Calu3 (cell line): ENCODE measurements at regions of chr16 and their contacts with region 1.

Region 1: GRCh38 chr16:10828851-10829731 is 10.5 kb upstream of the TVP23A start:
- DNase-seq: peak; percentile 79
- H3K4me3 Mint-ChIP-seq: peak overlapping the region; percentile 61
- H3K27ac Mint-ChIP-seq: peak overlapping the region; percentile 57
- H3K4me1 Mint-ChIP-seq: peaks cover 21% of the 10 kb centered on the region
- H3K27me3 Mint-ChIP-seq: no peaks in the 10 kb centered on the region
- CTCF ChIP-seq: no peak

Region 2: DNA sequence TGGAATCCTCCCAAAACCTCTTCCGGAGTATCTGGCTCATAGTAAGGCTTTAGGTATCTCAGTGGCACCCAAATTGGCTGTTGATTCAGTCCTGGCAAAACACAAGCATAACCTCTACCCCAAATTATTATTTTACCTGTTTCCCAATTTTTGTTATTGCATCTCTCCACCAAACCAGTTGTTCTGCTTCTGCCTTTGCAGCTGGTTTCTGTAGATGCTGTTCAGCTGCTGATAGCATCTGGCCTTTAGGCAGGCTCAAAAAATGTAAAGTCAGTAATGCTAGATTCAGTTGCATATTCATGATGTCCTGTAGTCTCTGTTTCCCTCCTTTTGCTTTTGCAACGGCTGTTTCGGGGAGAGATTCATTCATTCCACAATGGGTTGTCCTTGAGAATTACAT is 409.4 kb before region 1 on chr16:
- CTCF ChIA-PET with region 1: no interaction called
- intact Hi-C with region 1: no loop called
- DNase-seq: no peak
- H3K4me3 Mint-ChIP-seq: no peak overlapping the region
- H3K27ac Mint-ChIP-seq: no peak overlapping the region
- H3K4me1 Mint-ChIP-seq: no peaks in the 10 kb centered on the region
- H3K27me3 Mint-ChIP-seq: no peaks in the 10 kb centered on the region
- CTCF ChIP-seq: no peak

Region 3: GRCh38 chr16:10770907-10771306 is 58.2 kb before region 1 on chr16:
- CTCF ChIA-PET with region 1: no interaction called
- intact Hi-C with region 1: no loop called
- DNase-seq: no peak
- H3K4me3 Mint-ChIP-seq: no peak overlapping the region
- H3K27ac Mint-ChIP-seq: no peak overlapping the region
- H3K4me1 Mint-ChIP-seq: peaks cover 13% of the 10 kb centered on the region
- H3K27me3 Mint-ChIP-seq: no peaks in the 10 kb centered on the region
- CTCF ChIP-seq: no peak

Region 4: GRCh38 chr16:10799736-10800135 is 29.4 kb before region 1 on chr16:
- CTCF ChIA-PET with region 1: no interaction called
- intact Hi-C with region 1: no loop called
- DNase-seq: no peak
- H3K4me3 Mint-ChIP-seq: no peak overlapping the region
- H3K27ac Mint-ChIP-seq: no peak overlapping the region
- H3K4me1 Mint-ChIP-seq: no peaks in the 10 kb centered on the region
- H3K27me3 Mint-ChIP-seq: no peaks in the 10 kb centered on the region
- CTCF ChIP-seq: no peak

Region 5: DNA sequence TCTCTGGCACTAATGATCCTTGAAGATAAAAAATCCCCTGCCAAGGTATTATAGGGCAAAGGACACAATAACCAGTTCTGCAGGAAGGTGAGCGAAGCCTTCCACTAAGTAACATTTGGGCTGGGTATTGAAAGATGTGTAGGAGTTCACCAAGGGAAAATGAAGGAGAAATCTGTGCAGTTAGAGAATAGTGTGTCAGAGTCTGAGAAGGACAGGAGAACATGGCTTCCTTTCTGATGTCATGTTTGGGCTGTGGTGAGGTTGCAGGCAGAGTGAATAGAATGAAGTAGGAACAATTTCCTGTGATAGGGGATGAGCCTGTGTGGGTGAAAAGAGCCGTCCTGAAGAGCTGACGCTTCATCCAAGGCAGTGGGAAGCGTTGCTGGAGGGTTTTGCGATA is 23.9 kb after region 1 on chr16:
- CTCF ChIA-PET with region 1: no interaction called
- intact Hi-C with region 1: loop called (anchors 2 kb)
- DNase-seq: no peak
- H3K4me3 Mint-ChIP-seq: no peak overlapping the region
- H3K27ac Mint-ChIP-seq: peak overlapping the region; percentile 34
- H3K4me1 Mint-ChIP-seq: peaks cover 10% of the 10 kb centered on the region
- H3K27me3 Mint-ChIP-seq: peaks cover 9% of the 10 kb centered on the region
- CTCF ChIP-seq: no peak